HepG2 (cell line): ENCODE measurements at regions of chr1 and their contacts with region 1.

Region 1: DNA sequence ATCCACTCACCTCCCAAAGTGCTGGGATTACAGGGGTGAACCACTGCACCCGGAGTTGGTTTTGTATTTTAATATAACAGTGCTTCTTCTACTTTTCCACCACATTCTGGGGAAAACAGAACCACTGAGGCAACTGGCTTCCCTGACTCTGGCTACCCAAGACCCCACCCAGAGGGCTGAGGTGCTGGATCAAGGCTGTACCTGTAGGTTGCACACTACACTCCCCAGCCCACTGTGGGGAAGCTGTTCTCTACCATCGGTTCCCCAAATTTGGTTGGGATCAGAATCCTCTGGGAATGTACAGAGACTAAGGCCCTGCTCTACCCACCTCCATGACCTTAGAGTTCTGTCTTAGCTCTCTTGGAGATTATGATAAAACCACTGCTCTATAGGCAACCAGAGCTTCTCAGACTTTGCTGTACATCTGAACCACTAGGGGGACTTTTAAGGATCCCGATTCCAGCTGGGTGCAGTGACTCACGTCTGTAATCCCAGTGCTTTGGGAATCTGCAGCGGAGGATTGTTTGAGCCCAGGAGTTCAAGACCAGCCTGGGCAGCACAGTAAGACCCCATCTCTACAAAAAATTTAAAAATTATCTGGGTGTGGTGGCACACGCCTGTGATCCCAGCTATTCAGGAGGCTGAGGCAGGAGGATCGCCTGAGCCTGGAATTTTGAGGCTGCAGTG is 51.6 kb downstream of the GNG4 start:
- DNase-seq: peak; percentile 27
- ATAC-seq: peak; percentile 74
- H3K4me3 ChIP-seq: no peak overlapping the region
- H3K27ac ChIP-seq: no peak overlapping the region
- H3K4me1 ChIP-seq: no peaks in the 10 kb centered on the region
- H3K27me3 ChIP-seq: no peaks in the 10 kb centered on the region
- CTCF ChIP-seq: peak; percentile 40
- EP300 ChIP-seq: no peak
- POLR2A ChIP-seq: no peak
- RAD21 ChIP-seq: peak; percentile 27; the same call in 1 of the 2 replicates

Region 2: GRCh38 chr1:235725434-235725833 is 127.4 kb after region 1 on chr1:
- CTCF ChIA-PET with region 1: no interaction called
- POLR2A ChIA-PET with region 1: no interaction called
- in situ Hi-C with region 1: no loop called
- intact Hi-C with region 1: loop called (anchors 2 kb)
- DNase-seq: no peak
- ATAC-seq: no peak
- H3K4me3 ChIP-seq: no peak overlapping the region
- H3K27ac ChIP-seq: no peak overlapping the region
- H3K4me1 ChIP-seq: no peaks in the 10 kb centered on the region
- H3K27me3 ChIP-seq: no peaks in the 10 kb centered on the region
- CTCF ChIP-seq: no peak
- EP300 ChIP-seq: no peak
- POLR2A ChIP-seq: no peak
- RAD21 ChIP-seq: no peak

Region 3: GRCh38 chr1:235892734-235893413 is 294.9 kb after region 1 on chr1:
- CTCF ChIA-PET with region 1: no interaction called
- POLR2A ChIA-PET with region 1: no interaction called
- in situ Hi-C with region 1: no loop called
- intact Hi-C with region 1: no loop called
- DNase-seq: peak; percentile 83
- ATAC-seq: peak; percentile 92
- H3K4me3 ChIP-seq: peak overlapping the region in 1 of 3 experiments; percentile 22; a peak in 1 of 6 replicates
- H3K27ac ChIP-seq: peak overlapping the region; percentile 30
- H3K4me1 ChIP-seq: peaks cover 26% of the 10 kb centered on the region
- H3K27me3 ChIP-seq: no peaks in the 10 kb centered on the region
- CTCF ChIP-seq: no peak
- EP300 ChIP-seq: peak in 1 of 2 experiments; percentile 73; a peak in 1 of 4 replicates
- POLR2A ChIP-seq: no peak
- RAD21 ChIP-seq: no peak